Activated CD8-positive, alpha-beta memory T cell treated with anti-CD3 and anti-CD28 coated beads, Interleukin-2, amount 10 ng/mL, durations not matched to agents 7 days and 5 days (primary cell): ENCODE measurements at regions of chr7 and their contacts with region 1.

Region 1: DNA sequence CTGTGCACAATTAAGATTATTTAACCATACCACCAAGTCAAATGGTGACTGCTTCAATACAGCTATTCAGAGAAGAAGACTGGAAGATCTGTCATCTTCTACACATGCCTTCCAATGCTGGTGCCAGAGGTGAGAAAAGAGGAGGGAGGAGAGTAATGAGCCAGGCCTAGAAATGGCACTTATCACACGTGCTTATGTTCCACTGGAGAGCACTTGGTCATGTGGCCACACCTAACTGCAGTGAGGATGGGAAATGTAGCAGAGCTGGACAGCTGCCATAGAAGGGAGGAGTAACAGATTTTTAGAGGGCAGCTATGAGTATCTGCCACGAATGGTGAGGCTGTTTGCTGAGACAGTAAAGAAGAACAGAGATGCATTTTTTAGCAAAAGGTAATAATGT is 77.1 kb downstream of the MPLKIP start:
- DNase-seq: no peak
- ATAC-seq: no peak
- H3K4me3 Mint-ChIP-seq: no peak overlapping the region
- H3K27ac Mint-ChIP-seq: no peak overlapping the region
- H3K4me1 Mint-ChIP-seq: peaks cover 6% of the 10 kb centered on the region
- H3K27me3 Mint-ChIP-seq: no peaks in the 10 kb centered on the region

Region 2: DNA sequence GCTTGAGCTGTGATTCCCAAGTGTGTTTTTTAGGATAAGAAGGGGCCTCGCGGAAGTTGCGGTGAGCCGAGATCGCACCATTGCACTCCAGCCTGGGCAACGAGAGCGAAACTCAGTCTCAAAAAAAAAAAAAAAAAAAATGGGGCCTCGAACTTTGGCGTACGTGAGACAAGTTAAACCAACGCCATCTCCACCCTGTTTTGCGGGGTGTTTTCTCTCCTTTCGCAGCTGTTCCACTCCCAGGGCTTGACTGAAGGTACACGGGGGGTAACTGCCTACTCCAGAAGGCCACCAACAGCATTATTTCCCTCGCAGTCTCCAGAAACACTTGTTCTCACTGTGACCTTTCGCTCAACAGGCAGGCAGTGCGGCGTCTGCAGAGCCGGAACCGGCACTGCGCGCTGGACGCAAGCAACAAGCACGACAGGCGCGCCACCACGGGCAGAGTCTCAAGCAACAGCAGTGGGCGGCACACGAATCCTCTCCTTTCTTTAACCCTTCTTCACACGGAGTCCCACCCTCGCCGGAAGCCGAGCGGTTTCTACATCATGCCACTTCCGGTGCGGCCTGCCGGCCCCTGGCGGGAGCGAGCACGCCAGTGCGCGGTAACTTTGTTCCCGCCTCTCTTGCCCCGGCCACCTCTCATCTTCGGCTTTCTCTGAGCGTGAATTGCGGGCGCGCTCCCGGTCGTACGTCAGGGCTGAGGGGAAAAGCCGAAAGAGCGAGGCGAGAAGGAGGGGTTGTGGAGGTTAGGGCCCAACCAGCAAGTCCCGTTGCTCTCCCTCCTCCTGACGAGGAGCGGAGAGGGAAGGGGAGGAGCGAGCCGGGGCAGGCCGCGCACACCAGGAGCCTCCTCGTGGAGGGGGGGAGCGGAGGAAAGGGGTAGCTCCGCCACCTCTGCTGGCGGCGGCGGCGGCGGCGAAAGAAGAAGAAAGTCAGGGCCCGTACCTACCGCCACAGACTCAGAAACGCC is 108.0 kb before region 1 on chr7:
- CTCF ChIA-PET with region 1: interaction called, 24 read pairs
- DNase-seq: peak; percentile 98
- ATAC-seq: peak; percentile 75
- H3K4me3 Mint-ChIP-seq: peak overlapping the region; percentile 98
- H3K27ac Mint-ChIP-seq: peak overlapping the region; percentile 100
- H3K4me1 Mint-ChIP-seq: peaks cover 34% of the 10 kb centered on the region
- H3K27me3 Mint-ChIP-seq: peaks cover 4% of the 10 kb centered on the region

Region 3: GRCh38 chr7:39954694-39955093 is 102.6 kb before region 1 on chr7:
- CTCF ChIA-PET with region 1: interaction called, 24 read pairs
- DNase-seq: no peak
- ATAC-seq: no peak
- H3K4me3 Mint-ChIP-seq: no peak overlapping the region
- H3K27ac Mint-ChIP-seq: no peak overlapping the region
- H3K4me1 Mint-ChIP-seq: peaks cover 35% of the 10 kb centered on the region
- H3K27me3 Mint-ChIP-seq: no peaks in the 10 kb centered on the region